ENCODE measurements at regions of chr6 and their contacts with region 1.

Region 1: GRCh38 chr6:85464260-85464644 is 14.4 kb downstream of the NT5E start:
- DNase-seq: peak; percentile 61 to 85
- H3K4me3 ChIP-seq: peak overlapping the region; percentile 19; the same call in 1 of the 2 replicates
- H3K27ac ChIP-seq: peak overlapping the region; percentile 98
- H3K4me1 ChIP-seq: peaks cover 100% of the 10 kb centered on the region
- H3K27me3 ChIP-seq: no peaks in the 10 kb centered on the region
- CTCF ChIP-seq: no peak

Region 2: DNA sequence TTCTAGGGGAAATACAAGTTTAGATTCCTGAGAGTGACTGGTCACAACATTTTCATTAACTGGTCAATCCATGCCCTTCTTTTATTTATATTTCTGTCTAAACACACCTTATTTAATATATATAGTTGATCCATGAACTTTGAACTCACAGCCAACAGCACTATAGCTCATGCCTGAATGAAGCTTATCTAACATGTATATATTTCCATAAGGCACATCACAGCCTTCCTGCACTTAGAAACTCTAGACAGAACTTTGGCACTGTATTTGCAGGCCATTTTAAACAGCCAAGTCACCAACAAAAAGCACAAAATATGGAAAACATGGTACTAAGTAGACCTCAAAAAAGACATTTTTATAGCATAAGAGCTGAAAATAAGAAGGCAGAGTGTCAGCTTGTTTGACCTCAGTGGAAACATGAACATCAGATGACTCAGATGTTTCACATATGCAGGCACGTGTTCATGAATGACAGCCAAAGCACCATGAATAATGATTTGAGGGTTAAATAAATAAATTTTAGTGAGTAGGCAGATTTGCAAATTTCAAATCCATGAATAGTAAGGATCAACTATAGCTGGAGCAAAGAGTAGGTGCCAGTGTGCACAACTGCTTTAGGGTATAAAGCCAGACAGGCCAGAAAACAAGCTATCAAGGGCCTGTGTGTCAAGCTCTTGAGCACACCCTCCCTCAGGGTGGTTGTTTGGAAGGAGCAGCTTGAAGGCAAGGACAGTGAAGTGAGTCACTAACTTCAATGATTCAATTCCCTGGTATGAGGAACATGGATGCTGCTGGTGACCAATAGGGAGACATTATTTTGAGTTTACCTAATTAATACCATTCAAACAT is 103.2 kb before region 1 on chr6:
- CTCF ChIA-PET with region 1: no interaction called
- POLR2A ChIA-PET with region 1: interaction called, 3 read pairs
- intact Hi-C with region 1: loop called (anchors 1 kb)
- DNase-seq: peak; percentile 75 to 96
- H3K4me3 ChIP-seq: no peak overlapping the region
- H3K27ac ChIP-seq: peak overlapping the region; percentile 87
- H3K4me1 ChIP-seq: peaks cover 61% of the 10 kb centered on the region
- H3K27me3 ChIP-seq: no peaks in the 10 kb centered on the region
- CTCF ChIP-seq: no peak

Region 3: DNA sequence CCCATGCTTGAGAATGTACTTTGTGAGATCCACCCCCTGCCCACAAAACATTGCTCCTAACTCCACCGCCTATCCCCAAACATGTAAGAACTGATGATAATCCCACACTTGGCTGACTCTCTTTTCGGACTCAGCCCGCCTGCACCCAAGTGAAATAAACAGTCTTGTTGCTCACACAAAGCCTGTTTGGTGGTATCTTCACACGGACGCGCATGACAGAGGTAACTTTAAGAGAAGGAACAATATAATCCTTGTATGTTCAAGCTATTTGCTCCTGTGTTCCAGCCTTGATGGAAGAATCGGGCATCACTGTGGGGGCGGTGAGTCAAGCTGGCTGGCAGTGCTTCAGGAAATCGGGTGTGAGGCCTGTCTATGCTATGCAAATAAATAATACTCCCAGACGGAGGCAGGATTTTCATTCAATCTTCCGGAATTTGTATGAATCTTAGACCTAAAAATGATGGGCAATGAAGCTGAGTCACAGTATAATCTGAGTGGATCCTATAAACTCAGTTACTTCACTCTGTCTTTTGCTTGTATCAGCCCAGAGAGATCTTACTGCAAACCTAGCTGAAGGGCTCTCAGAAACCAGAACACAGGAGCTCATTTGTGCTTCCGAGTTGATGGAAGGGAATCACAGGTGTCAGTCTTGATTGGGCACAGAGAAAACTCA is 59.6 kb before region 1 on chr6:
- CTCF ChIA-PET with region 1: no interaction called
- POLR2A ChIA-PET with region 1: interaction called, 3 read pairs
- intact Hi-C with region 1: loop called (anchors 2 kb)
- DNase-seq: peak; percentile 60 to 73
- H3K4me3 ChIP-seq: no peak overlapping the region; the same call in 1 of the 2 replicates
- H3K27ac ChIP-seq: peak overlapping the region; percentile 75
- H3K4me1 ChIP-seq: peaks cover 51% of the 10 kb centered on the region
- H3K27me3 ChIP-seq: no peaks in the 10 kb centered on the region
- CTCF ChIP-seq: no peak

Region 4: GRCh38 chr6:85449818-85450759 is 14.2 kb before region 1 on chr6 and contains the start of gene NT5E:
- CTCF ChIA-PET with region 1: no interaction called
- POLR2A ChIA-PET with region 1: interaction called, 4 read pairs
- intact Hi-C with region 1: loop called (anchors 2 kb)
- DNase-seq: peak; percentile 71 to 88
- H3K4me3 ChIP-seq: peak within 1 kb of the TSS; percentile 94
- H3K27ac ChIP-seq: peak within 1 kb of the TSS; percentile 74
- H3K4me1 ChIP-seq: peaks cover 52% of the 10 kb centered on the region
- H3K27me3 ChIP-seq: no peaks in the 10 kb centered on the region
- CTCF ChIP-seq: no peak
- total RNA-seq, gene NT5E: 84.6 and 90.4 TPM in 2 replicates

Region 5: DNA sequence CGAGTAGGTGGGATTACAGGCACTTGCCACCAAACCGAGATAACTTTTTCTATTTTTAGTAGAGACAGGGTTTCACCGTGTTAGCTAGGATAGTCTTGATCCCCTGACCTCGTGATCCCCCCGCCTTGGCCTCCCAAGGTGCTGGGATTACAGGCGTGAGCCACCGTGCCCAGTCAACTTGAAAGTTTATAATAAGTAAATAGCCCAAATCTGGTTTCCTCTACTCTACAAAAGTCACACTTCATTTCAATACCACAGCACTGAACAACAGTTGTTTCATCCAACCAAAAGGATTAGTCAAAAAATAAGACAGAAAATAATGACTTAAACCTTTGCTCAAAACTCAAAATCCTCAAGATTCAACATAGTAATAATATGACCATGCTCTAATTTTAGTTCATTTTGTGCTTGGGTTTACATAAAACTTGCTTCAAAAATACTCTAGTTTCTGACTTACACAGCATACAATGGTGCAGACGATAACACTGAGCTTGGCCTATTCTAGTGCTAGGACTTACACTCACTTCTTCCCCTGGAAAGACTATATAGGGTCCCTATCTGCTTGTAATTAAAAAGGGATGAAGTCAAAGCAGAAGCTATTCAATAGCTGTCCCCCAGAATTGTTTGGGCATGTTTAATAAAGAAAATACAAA is 42.3 kb after region 1 on chr6:
- CTCF ChIA-PET with region 1: no interaction called
- POLR2A ChIA-PET with region 1: interaction called, 11 read pairs
- intact Hi-C with region 1: no loop called
- DNase-seq: no peak
- H3K4me3 ChIP-seq: no peak overlapping the region
- H3K27ac ChIP-seq: no peak overlapping the region
- H3K4me1 ChIP-seq: no peaks in the 10 kb centered on the region
- H3K27me3 ChIP-seq: no peaks in the 10 kb centered on the region
- CTCF ChIP-seq: no peak

Region 6: DNA sequence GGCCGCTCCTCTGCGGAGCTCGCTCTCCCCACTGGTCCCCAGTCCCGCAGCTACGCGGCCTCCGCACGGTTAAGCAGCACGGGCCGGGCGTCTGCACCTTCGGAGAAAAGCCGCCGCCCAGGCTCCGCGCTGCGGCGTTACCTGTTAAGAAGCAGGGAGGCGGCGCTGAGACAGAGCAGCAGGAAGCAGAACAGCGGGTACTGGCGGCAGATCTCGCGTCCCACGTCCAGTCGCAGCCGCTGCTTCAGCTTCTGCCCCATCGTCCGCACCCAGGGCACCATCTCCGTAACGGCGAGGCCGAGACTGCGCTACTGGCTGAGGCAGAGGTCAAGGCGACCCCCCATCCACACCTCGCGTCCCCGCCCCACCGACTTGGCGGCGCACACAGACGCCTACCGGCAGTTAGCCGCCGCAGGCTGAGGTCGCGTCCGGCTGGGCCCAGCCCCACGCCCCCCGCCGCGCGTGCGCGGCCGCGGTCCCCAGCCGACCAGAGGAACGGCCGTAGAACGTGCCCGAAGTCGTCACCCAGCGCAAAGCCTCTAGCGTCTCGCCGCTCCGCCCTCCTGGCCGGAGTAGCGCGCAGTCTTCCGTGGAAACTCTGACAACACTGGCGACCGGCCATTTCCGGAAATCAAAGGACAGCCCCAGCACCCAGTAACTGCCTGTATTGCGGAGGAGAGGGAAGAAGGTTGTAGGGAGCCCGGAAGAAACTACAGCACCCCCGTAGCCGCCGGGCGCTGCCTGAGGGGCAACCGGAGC is 129.4 kb after region 1 on chr6 and contains the start of gene SNX14:
- CTCF ChIA-PET with region 1: no interaction called
- POLR2A ChIA-PET with region 1: no interaction called
- intact Hi-C with region 1: loop called (anchors 5 kb)
- DNase-seq: peak; percentile 85 to 92
- H3K4me3 ChIP-seq: peak within 1 kb of the TSS; percentile 84
- H3K27ac ChIP-seq: peak within 1 kb of the TSS; percentile 76
- H3K4me1 ChIP-seq: peaks cover 34% of the 10 kb centered on the region
- H3K27me3 ChIP-seq: no peaks in the 10 kb centered on the region
- CTCF ChIP-seq: no peak
- total RNA-seq, gene SNX14: 92.0 and 99.1 TPM in 2 replicates

Region 7: GRCh38 chr6:85678602-85679444 is 214.6 kb after region 1 on chr6:
- CTCF ChIA-PET with region 1: no interaction called
- POLR2A ChIA-PET with region 1: interaction called, 12 read pairs
- intact Hi-C with region 1: no loop called
- DNase-seq: peak; percentile 86 to 96
- H3K4me3 ChIP-seq: peak overlapping the region; percentile 95
- H3K27ac ChIP-seq: peak overlapping the region; percentile 77
- H3K4me1 ChIP-seq: peaks cover 17% of the 10 kb centered on the region
- H3K27me3 ChIP-seq: no peaks in the 10 kb centered on the region
- CTCF ChIP-seq: no peak

Region 8: DNA sequence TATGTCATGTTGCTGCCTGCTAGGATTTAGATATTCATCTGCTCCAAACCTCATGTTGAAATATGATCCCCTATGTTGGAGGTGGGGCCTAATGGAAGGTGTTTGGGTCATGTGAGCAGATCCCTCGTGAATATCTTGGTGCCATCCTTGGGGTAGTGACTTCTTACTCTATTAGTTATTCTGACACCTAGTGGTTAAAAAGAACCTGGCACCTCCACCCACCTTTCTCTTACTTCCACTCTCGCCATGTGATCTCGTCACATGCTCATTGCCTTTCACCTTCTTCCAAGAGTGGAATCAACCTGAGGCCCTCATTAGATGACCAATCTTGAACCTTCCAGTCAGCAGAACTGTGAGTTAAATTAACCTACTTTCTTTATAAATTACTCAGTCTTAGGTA is 727.9 kb after region 1 on chr6:
- CTCF ChIA-PET with region 1: no interaction called
- POLR2A ChIA-PET with region 1: no interaction called
- intact Hi-C with region 1: no loop called
- DNase-seq: no peak
- H3K4me3 ChIP-seq: no peak overlapping the region
- H3K27ac ChIP-seq: no peak overlapping the region
- H3K4me1 ChIP-seq: no peaks in the 10 kb centered on the region
- H3K27me3 ChIP-seq: no peaks in the 10 kb centered on the region
- CTCF ChIP-seq: peak; percentile 45

Measured in PC-9 (cell line).